ENCODE measurements at regions of chr18 and their contacts with region 1.

Region 1: GRCh38 chr18:22703883-22704585 is 229.1 kb upstream of the RBBP8 start:
- DNase-seq: no peak
- H3K4me3 Mint-ChIP-seq: no peak overlapping the region
- H3K27ac Mint-ChIP-seq: no peak overlapping the region
- H3K4me1 Mint-ChIP-seq: no peaks in the 10 kb centered on the region
- H3K27me3 Mint-ChIP-seq: peaks cover 2% of the 10 kb centered on the region

Region 2: GRCh38 chr18:21997207-21998143 is 706.6 kb before region 1 on chr18:
- CTCF ChIA-PET with region 1: no interaction called
- POLR2A ChIA-PET with region 1: no interaction called
- intact Hi-C with region 1: loop called (anchors 5 kb)
- DNase-seq: no peak
- H3K4me3 Mint-ChIP-seq: no peak overlapping the region
- H3K27ac Mint-ChIP-seq: no peak overlapping the region
- H3K4me1 Mint-ChIP-seq: peaks cover 4% of the 10 kb centered on the region
- H3K27me3 Mint-ChIP-seq: no peaks in the 10 kb centered on the region

Region 3: GRCh38 chr18:22169007-22169864 is 534.8 kb before region 1 on chr18 and contains the start of gene GATA6:
- CTCF ChIA-PET with region 1: no interaction called
- POLR2A ChIA-PET with region 1: no interaction called
- intact Hi-C with region 1: loop called (anchors 5 kb)
- DNase-seq: peak; percentile 53
- H3K4me3 Mint-ChIP-seq: peak within 1 kb of the TSS; percentile 71
- H3K27ac Mint-ChIP-seq: no peak within 1 kb of the TSS
- H3K4me1 Mint-ChIP-seq: peaks cover 31% of the 10 kb centered on the region
- H3K27me3 Mint-ChIP-seq: peaks cover 71% of the 10 kb centered on the region
- total RNA-seq, gene GATA6: 0.07 to 0.10 TPM

Region 4: GRCh38 chr18:22689712-22690111 is 14.3 kb before region 1 on chr18:
- CTCF ChIA-PET with region 1: no interaction called
- POLR2A ChIA-PET with region 1: no interaction called
- intact Hi-C with region 1: no loop called
- DNase-seq: no peak
- H3K4me3 Mint-ChIP-seq: no peak overlapping the region
- H3K27ac Mint-ChIP-seq: no peak overlapping the region
- H3K4me1 Mint-ChIP-seq: no peaks in the 10 kb centered on the region
- H3K27me3 Mint-ChIP-seq: peaks cover 3% of the 10 kb centered on the region

Region 5: GRCh38 chr18:22872900-22873551 is 169.0 kb after region 1 on chr18:
- CTCF ChIA-PET with region 1: no interaction called
- POLR2A ChIA-PET with region 1: no interaction called
- intact Hi-C with region 1: no loop called
- DNase-seq: no peak
- H3K4me3 Mint-ChIP-seq: peak overlapping the region; percentile 7
- H3K27ac Mint-ChIP-seq: no peak overlapping the region
- H3K4me1 Mint-ChIP-seq: peaks cover 6% of the 10 kb centered on the region
- H3K27me3 Mint-ChIP-seq: peaks cover 5% of the 10 kb centered on the region

Region 6: DNA sequence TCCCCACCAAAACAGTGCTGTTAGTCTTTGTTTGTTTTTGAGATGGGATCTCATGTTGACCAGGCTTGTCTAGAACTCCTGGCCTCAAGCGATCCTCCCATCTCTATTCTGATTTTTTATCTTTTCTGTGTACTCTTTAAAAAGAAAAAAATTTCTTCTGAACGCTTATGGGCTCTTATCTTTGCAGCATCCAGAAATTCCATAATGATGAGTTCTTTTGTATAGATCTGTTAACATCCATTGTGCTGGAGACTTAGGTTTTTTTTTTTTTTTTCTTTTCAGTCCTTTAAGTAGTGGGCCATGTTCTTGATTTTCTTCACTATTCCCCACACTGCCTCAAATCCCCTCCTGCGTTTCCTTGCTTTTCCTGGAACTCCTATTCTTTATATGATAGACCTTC is 260.1 kb after region 1 on chr18:
- CTCF ChIA-PET with region 1: no interaction called
- POLR2A ChIA-PET with region 1: no interaction called
- intact Hi-C with region 1: no loop called
- DNase-seq: no peak
- H3K4me3 Mint-ChIP-seq: no peak overlapping the region
- H3K27ac Mint-ChIP-seq: no peak overlapping the region
- H3K4me1 Mint-ChIP-seq: peaks cover 4% of the 10 kb centered on the region
- H3K27me3 Mint-ChIP-seq: no peaks in the 10 kb centered on the region